Kidney (tissue), 22 donors: ENCODE measurements at regions of chr12 and their contacts with region 1.

Region 1: DNA sequence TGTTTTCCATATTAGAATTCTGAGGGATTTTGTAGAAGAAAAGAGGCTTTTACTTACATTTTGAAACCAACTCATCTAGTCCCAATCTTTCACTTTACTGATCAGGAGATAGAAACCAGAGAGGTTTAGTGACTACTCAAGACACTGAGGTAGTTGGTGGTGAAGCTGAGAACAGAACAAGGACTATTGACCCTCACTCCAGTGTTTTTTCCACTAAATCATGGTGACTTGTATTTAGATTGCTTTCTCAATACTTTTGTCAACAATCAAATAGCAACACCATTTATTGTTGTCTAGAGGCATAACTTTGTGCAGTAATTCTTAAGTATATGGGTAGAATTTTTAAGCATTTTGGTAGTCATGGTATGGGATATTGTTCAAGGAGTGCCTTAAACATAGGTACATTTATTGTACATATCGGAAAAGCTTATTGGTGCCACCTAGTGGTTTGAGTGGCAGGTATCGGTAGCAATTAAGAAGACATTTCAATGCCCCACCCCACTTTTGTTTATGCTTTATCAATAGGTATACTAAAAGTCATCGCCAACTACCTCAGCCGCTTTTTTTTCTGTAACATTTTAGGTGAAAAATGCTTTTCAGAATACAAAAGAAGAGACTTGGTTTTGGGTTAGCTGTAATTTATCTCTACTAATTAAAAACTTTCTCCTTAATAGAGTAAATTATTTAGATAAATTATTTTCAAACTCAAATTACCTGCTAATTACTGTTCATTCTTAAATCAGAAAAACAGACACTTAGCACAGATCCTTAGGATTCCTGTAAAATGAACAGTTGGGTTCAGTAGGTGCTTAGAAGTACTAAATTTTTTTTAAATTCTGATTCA is 47.3 kb upstream of the PAWR start:
- DNase-seq: peak in 3 of 5 donors; percentile 11 to 74 (median 55)
- H3K4me3 ChIP-seq: no peak overlapping the region
- H3K27ac ChIP-seq: no peak overlapping the region
- H3K4me1 ChIP-seq: no peaks in the 10 kb centered on the region
- H3K27me3 ChIP-seq: no peaks in the 10 kb centered on the region
- CTCF ChIP-seq: peak; percentile 63

Region 2: DNA sequence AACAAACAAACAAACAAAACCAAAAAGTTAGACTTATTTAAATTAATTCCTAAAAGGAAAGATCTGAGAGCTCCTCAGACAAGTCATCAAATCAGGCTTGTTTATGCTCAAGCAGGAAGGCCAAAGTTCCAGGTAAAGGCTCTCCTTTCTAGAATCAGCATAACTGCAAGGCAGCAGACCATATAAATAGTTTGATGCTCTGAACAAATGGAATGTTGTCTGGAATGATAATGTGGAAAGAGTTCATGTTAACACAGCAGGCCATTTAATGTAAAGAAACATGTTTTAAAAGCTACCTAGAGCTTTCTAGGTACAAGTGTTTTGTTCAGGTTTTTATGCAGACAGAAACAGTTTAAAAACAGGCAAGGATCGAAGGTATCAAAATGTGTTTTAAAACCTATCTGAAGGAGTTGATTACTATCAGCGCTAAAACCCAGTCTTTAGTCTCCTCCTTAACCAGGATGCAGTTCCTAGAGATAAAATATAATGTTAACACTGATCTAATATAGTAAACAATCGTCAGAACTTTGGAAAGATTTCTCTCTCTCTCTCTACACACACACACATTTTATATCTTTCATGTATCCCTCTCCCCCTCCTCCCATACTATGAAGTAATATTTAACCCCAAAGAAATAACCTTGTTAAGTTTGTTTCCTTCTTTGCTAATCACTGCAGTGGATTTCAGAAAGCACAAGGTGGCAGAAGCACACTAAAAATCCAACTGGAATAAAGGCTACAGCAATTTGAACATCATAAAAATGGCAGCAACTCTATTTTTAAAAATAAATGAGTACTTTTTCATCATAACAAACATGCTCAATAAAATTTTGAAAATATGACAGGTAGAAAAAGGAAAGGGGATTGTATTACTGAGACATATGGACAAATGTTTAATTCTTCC is 182.8 kb before region 1 on chr12:
- intact Hi-C with region 1: loop called (anchors 10 kb)
- DNase-seq: peak in 3 of 5 donors; percentile 24 to 89 (median 88)
- H3K4me3 ChIP-seq: no peak overlapping the region
- H3K27ac ChIP-seq: peak overlapping the region; percentile 88
- H3K4me1 ChIP-seq: peaks cover 2 to 33% (median 26%) of the 10 kb centered on the region in 3 donors
- H3K27me3 ChIP-seq: no peaks in the 10 kb centered on the region
- CTCF ChIP-seq: peak; percentile 71

Region 3: DNA sequence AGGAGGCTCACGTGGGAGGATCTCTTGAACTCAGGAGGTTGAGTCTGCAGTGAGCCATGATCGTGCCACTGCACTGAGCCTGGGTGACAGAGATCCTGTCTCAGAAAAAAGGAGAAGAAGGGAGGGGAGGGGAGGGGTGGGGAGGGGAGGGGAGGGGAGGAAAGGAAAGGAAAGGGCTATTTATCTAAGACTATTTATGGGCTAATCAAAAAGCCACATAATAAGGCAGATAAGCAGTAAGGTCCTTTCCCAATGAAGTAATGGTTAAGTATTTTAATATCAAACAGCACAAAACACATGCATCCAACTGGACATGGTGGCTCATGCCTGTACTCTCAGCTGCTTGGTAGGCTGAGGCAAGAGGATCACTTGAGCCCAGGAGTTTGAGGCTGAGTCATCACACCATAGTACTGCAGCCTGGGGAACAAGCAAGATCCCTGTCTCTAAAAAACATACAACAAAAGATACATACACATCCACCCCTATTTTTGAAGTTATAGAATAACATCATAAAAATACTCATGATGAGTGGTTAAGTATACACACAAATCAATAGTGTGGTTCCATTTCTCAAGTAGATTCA is 57.0 kb before region 1 on chr12:
- intact Hi-C with region 1: no loop called
- DNase-seq: no peak
- H3K4me3 ChIP-seq: no peak overlapping the region
- H3K27ac ChIP-seq: no peak overlapping the region
- H3K4me1 ChIP-seq: peaks cover 0 to 34% (median 0%) of the 10 kb centered on the region in 3 donors
- H3K27me3 ChIP-seq: no peaks in the 10 kb centered on the region
- CTCF ChIP-seq: no peak

Region 4: GRCh38 chr12:80262346-80262745 is 524.2 kb after region 1 on chr12:
- intact Hi-C with region 1: no loop called
- DNase-seq: no peak
- H3K4me3 ChIP-seq: no peak overlapping the region
- H3K27ac ChIP-seq: no peak overlapping the region
- H3K4me1 ChIP-seq: no peaks in the 10 kb centered on the region
- H3K27me3 ChIP-seq: no peaks in the 10 kb centered on the region
- CTCF ChIP-seq: no peak